Mammary epithelial cell (primary cell): ENCODE measurements at regions of chr17 and their contacts with region 1.

Region 1: DNA sequence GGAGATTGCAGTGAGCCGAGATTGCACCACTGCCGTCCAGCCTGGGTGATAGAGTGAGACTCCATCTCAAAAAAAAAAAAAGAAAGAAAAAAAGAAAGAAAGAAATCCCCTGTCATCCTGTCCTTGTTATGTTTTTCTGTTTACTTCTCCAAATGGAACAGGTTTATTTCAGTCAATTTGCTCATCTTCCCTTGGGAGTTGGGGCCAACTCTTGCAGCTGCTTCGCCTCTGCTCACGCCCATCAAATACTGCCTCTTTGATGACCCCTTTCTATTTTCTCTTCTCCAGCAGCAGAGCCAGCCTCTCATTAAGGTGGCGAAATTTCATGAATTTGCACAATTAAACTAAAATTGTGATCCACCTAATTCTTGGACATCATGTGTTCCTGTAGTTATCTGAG is 173.4 kb downstream of the ZNF18 start:
- DNase-seq: no peak
- H3K4me3 ChIP-seq: no peak overlapping the region
- H3K27ac ChIP-seq: no peak overlapping the region
- H3K4me1 ChIP-seq: no peaks in the 10 kb centered on the region
- H3K27me3 ChIP-seq: no peaks in the 10 kb centered on the region
- CTCF ChIP-seq: no peak

Region 2: GRCh38 chr17:11899537-11899942 is 75.7 kb after region 1 on chr17:
- CTCF ChIA-PET with region 1: no interaction called
- dilution Hi-C with region 1: loop called (anchors 5 kb)
- in situ Hi-C with region 1: no loop called
- intact Hi-C with region 1: no loop called
- DNase-seq: no peak
- H3K4me3 ChIP-seq: no peak overlapping the region
- H3K27ac ChIP-seq: no peak overlapping the region
- H3K4me1 ChIP-seq: no peaks in the 10 kb centered on the region
- H3K27me3 ChIP-seq: no peaks in the 10 kb centered on the region
- CTCF ChIP-seq: peak in 1 of 2 donors; percentile 13

Region 3: GRCh38 chr17:12020642-12021622 is 197.1 kb after region 1 on chr17 and contains the start of gene MAP2K4:
- CTCF ChIA-PET with region 1: no interaction called
- dilution Hi-C with region 1: no loop called
- in situ Hi-C with region 1: no loop called
- intact Hi-C with region 1: no loop called
- DNase-seq: peak; percentile 86
- H3K4me3 ChIP-seq: peak within 1 kb of the TSS; percentile 67 to 83 (median 72)
- H3K27ac ChIP-seq: peak within 1 kb of the TSS; percentile 64
- H3K4me1 ChIP-seq: peaks cover 40% of the 10 kb centered on the region
- H3K27me3 ChIP-seq: no peaks in the 10 kb centered on the region
- CTCF ChIP-seq: no peak
- total RNA-seq, gene MAP2K4: 36.2 to 42.2 TPM